ENCODE measurements at regions of chr17 and their contacts with region 1.

Region 1: DNA sequence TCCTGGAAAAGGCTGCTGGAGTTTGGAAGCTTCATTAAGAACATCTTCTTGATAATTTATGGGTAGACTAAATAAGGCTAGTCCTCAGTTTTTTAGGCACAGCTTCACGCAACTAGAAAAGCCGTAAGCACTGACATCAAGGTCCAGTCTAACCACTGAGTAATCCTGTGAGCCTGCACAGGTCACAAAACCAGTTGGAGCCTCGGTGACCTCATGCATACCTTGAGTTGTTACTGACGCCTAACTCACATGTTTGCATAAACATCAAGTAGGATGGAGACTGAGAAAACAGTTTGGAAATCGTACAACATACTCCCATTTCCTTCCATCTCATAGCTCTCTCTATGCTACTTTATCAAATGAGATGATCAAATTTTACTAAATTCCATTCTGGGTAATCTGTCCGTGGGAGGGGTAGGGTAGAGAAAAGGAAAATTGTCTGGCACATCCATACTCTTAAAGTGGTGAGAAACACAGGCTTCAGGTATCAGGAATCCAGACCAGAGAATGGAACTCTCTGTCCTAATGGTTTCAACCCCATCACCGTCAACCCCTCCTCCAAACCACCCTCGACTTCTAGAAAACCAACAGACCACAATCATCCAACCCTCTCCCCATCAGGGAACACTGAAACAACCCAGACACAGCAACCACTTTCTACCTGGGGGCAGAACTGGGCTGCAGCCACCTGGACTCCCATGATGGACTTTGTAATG is 64.0 kb upstream of the RCVRN start:
- DNase-seq: no peak
- H3K4me3 ChIP-seq: no peak overlapping the region
- H3K27ac ChIP-seq: no peak overlapping the region
- H3K4me1 ChIP-seq: no peaks in the 10 kb centered on the region
- H3K27me3 ChIP-seq: no peaks in the 10 kb centered on the region
- CTCF ChIP-seq: no peak
- POLR2A ChIP-seq: no peak

Region 2: GRCh38 chr17:10226930-10227685 is 258.0 kb after region 1 on chr17:
- intact Hi-C with region 1: loop called (anchors 5 kb)
- DNase-seq: peak; percentile 46
- H3K4me3 ChIP-seq: no peak overlapping the region
- H3K27ac ChIP-seq: no peak overlapping the region
- H3K4me1 ChIP-seq: no peaks in the 10 kb centered on the region
- H3K27me3 ChIP-seq: no peaks in the 10 kb centered on the region
- CTCF ChIP-seq: peak; percentile 53 to 84 (median 71)
- POLR2A ChIP-seq: no peak

Measured in prostate gland (tissue), 2 donors.